HCT116 (cell line): ENCODE measurements at regions of chr10 and their contacts with region 1.

Region 1: GRCh38 chr10:56317603-56318002 is 43.5 kb downstream of the ZWINT start:
- DNase-seq: no peak
- ATAC-seq: no peak
- H3K4me3 ChIP-seq: no peak overlapping the region
- H3K27ac ChIP-seq: no peak overlapping the region
- H3K4me1 ChIP-seq: no peaks in the 10 kb centered on the region
- H3K27me3 ChIP-seq: no peaks in the 10 kb centered on the region
- CTCF ChIP-seq: no peak
- POLR2A ChIP-seq: no peak
- RAD21 ChIP-seq: no peak

Region 2: GRCh38 chr10:56296638-56297037 is 21.0 kb before region 1 on chr10:
- CTCF ChIA-PET with region 1: no interaction called
- POLR2A ChIA-PET with region 1: no interaction called
- RAD21 ChIA-PET with region 1: no interaction called
- intact Hi-C with region 1: loop called (anchors 2 kb)
- DNase-seq: no peak
- ATAC-seq: no peak
- H3K4me3 ChIP-seq: no peak overlapping the region
- H3K27ac ChIP-seq: no peak overlapping the region
- H3K4me1 ChIP-seq: no peaks in the 10 kb centered on the region
- H3K27me3 ChIP-seq: no peaks in the 10 kb centered on the region
- CTCF ChIP-seq: no peak
- POLR2A ChIP-seq: no peak
- RAD21 ChIP-seq: no peak